Mammary epithelial cell (primary cell): ENCODE measurements at regions of chr6 and their contacts with region 1.

Region 1: DNA sequence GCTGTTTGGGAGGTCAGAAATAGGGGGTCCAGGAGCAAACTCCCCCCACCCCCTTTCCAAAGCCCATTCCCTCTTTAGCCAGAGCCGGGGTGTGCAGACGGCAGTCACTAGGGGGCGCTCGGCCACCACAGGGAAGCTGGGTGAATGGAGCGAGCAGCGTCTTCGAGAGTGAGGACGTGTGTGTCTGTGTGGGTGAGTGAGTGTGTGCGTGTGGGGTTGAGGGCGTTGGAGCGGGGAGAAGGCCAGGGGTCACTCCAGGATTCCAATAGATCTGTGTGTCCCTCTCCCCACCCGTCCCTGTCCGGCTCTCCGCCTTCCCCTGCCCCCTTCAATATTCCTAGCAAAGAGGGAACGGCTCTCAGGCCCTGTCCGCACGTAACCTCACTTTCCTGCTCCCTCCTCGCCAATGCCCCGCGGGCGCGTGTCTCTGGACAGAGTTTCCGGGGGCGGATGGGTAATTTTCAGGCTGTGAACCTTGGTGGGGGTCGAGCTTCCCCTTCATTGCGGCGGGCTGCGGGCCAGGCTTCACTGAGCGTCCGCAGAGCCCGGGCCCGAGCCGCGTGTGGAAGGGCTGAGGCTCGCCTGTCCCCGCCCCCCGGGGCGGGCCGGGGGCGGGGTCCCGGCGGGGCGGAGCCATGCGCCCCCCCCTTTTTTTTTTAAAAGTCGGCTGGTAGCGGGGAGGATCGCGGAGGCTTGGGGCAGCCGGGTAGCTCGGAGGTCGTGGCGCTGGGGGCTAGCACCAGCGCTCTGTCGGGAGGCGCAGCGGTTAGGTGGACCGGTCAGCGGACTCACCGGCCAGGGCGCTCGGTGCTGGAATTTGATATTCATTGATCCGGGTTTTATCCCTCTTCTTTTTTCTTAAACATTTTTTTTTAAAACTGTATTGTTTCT is at the start of gene VEGFA:
- DNase-seq: peak; percentile 84
- H3K4me3 ChIP-seq: peak within 1 kb of the TSS; percentile 97 to 98 (median 98)
- H3K27ac ChIP-seq: peak within 1 kb of the TSS; percentile 77
- H3K4me1 ChIP-seq: peaks cover 21% of the 10 kb centered on the region
- H3K27me3 ChIP-seq: no peaks in the 10 kb centered on the region
- CTCF ChIP-seq: peak; percentile 98
- total RNA-seq, gene VEGFA: 161 to 313 TPM

Region 2: GRCh38 chr6:43667245-43668150 is 102.3 kb before region 1 on chr6:
- CTCF ChIA-PET with region 1: no interaction called
- dilution Hi-C with region 1: no loop called
- in situ Hi-C with region 1: loop called in 1 of 2 experiments (anchors 10 kb)
- intact Hi-C with region 1: loop called (anchors 1 kb)
- DNase-seq: peak; percentile 69
- H3K4me3 ChIP-seq: no peak overlapping the region
- H3K27ac ChIP-seq: peak overlapping the region; percentile 2
- H3K4me1 ChIP-seq: peaks cover 47% of the 10 kb centered on the region
- H3K27me3 ChIP-seq: no peaks in the 10 kb centered on the region
- CTCF ChIP-seq: peak; percentile 96 to 98

Region 3: GRCh38 chr6:43856005-43856765 is 86.4 kb after region 1 on chr6:
- CTCF ChIA-PET with region 1: no interaction called
- dilution Hi-C with region 1: no loop called
- in situ Hi-C with region 1: no loop called
- intact Hi-C with region 1: loop called (anchors 5 kb)
- DNase-seq: peak; percentile 45
- H3K4me3 ChIP-seq: no peak overlapping the region
- H3K27ac ChIP-seq: no peak overlapping the region
- H3K4me1 ChIP-seq: peaks cover 7% of the 10 kb centered on the region
- H3K27me3 ChIP-seq: no peaks in the 10 kb centered on the region
- CTCF ChIP-seq: peak; percentile 36 to 61

Region 4: DNA sequence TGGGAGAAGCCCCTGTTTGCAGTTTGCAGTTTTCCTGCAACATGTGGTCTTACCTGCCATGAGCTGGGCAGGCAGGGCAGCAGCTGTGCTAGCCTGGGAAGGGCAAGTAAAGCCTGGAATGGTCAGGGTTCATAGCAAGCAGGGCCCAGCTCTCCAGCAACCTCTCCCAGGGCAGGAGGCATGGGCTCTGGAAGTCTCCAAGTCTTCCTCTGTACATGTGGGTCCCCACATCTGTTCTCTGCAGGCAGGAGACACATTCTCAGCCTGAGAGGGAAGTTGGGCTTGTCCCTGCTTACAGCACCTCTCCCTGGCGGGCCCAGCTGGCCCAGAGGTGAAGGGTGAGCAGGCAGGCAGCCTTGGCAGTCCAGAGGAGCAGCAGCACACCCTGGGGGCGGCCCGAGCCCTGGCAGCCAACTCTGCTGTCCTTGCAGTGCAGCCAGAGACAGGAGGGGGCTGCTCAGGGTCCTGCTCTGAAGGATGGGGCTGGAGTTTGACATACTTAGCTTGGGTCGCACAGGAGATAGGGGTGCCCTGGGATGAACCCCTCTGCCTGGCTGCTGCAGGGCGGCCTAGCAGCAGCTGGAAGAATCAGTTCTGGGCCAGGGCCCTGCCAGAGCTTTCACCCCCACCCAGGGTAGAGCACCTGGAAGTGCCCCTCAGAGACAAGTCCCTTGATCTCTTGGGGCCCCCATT is 181.4 kb after region 1 on chr6:
- CTCF ChIA-PET with region 1: no interaction called
- dilution Hi-C with region 1: no loop called
- in situ Hi-C with region 1: no loop called
- intact Hi-C with region 1: loop called (anchors 2 kb)
- DNase-seq: no peak
- H3K4me3 ChIP-seq: no peak overlapping the region
- H3K27ac ChIP-seq: no peak overlapping the region
- H3K4me1 ChIP-seq: no peaks in the 10 kb centered on the region
- H3K27me3 ChIP-seq: no peaks in the 10 kb centered on the region
- CTCF ChIP-seq: peak; percentile 17 to 40

Region 5: DNA sequence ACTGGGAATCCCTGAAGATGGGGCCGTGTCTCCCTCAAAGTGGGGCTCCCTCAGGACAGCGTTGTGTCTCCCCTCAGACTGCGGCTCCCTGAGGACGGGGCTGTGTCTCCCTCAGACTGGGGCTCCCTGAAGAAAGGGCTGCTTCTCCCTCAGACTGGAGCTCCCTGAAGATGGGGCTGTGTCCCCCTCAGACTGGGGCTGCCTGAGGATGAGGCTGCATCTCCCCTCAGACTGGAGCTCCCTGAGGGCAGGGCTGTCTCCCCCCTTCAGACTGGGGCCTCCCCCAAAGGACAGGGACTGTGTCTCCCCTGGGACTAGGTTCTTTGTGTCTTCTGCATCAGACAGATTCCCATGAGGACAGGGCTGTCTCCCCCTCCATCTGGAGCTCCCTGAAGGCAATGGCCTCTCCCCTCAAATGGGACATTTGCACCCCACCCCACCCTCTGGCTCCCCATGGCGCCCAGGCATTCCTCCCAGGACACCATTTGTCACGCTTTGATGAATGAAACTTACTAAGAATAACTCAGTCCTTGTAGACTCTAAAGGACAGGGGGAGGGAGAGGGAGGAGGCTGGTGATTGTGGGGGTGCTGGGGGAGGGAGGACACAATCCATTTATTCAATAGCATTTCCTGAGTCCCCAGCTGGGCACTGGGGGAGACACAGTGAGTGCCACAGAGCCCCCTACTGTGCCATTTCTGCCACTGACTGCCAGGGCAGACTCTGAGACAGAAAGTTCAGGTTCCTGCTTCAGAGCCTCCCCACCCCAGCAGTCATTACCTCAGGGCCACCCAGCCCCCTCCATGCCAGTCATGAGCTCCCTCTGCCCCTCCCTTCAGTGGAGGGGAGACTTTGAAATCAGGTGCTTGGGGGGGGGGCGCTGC is 235.1 kb after region 1 on chr6:
- CTCF ChIA-PET with region 1: no interaction called
- dilution Hi-C with region 1: no loop called
- in situ Hi-C with region 1: no loop called
- intact Hi-C with region 1: loop called (anchors 2 kb)
- DNase-seq: no peak
- H3K4me3 ChIP-seq: no peak overlapping the region
- H3K27ac ChIP-seq: no peak overlapping the region
- H3K4me1 ChIP-seq: peaks cover 15% of the 10 kb centered on the region
- H3K27me3 ChIP-seq: no peaks in the 10 kb centered on the region
- CTCF ChIP-seq: peak; percentile 11 to 55

Region 6: GRCh38 chr6:44064089-44064947 is 294.5 kb after region 1 on chr6:
- CTCF ChIA-PET with region 1: no interaction called
- dilution Hi-C with region 1: no loop called
- in situ Hi-C with region 1: loop called in 1 of 2 experiments (anchors 5 kb)
- intact Hi-C with region 1: no loop called
- DNase-seq: peak; percentile 99
- H3K4me3 ChIP-seq: no peak overlapping the region
- H3K27ac ChIP-seq: peak overlapping the region; percentile 85
- H3K4me1 ChIP-seq: peaks cover 73% of the 10 kb centered on the region
- H3K27me3 ChIP-seq: no peaks in the 10 kb centered on the region
- CTCF ChIP-seq: no peak